CD14-positive monocyte (primary cell): ENCODE measurements at regions of chr1 and their contacts with region 1.

Region 1: DNA sequence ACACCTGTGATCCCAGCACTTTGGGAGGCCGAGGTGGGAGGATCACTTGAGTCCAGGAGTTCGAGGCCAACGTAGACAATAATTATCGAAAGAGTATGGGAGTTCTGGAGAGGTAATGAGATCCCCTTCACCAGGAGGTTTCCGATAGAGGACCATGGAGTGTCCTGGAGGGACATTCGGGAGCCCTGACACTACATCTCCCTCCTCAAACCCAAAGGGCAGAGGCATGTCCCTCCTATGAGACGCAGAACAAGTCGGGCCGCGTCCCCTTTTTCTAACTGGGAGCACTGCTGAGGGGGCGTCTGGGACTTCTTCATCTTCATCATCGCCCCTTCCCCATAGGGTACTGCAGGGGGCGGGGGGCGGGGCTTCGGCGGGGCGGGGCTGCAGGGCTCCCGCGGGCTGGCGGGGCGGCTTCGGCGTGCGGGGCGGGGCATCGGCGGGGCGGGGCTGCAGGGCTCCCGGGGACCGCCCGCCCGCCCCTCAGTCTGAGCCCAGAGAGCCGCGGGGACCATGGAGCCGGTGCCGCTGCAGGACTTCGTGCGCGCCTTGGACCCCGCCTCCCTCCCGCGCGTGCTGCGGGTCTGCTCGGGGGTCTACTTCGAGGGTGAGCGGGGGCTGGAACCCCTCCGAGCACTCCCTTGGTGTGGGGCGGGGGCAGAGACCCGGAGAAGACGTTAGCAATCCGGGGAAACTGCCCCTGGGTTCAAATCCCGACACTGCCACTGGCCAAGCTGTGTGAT is at the start of gene THEMIS2:
- DNase-seq: peak; percentile 65 to 67 (median 65)
- H3K4me3 ChIP-seq: peak within 1 kb of the TSS; percentile 86 to 100 (median 90)
- H3K4me3 Mint-ChIP-seq: peak within 1 kb of the TSS; percentile 99
- H3K27ac ChIP-seq: peak within 1 kb of the TSS; percentile 96 to 99
- H3K27ac Mint-ChIP-seq: peak within 1 kb of the TSS; percentile 99
- H3K4me1 ChIP-seq: peaks cover 73 to 87% of the 10 kb centered on the region in 2 donors
- H3K4me1 Mint-ChIP-seq: peaks cover 56% of the 10 kb centered on the region
- H3K27me3 ChIP-seq: no peaks in the 10 kb centered on the region
- H3K27me3 Mint-ChIP-seq: peaks cover 0 to 1% (median 0%) of the 10 kb centered on the region in 3 donors
- CTCF ChIP-seq: no peak
- polyA plus RNA-seq, gene THEMIS2: 306 to 618 (median 344) TPM

Region 2: DNA sequence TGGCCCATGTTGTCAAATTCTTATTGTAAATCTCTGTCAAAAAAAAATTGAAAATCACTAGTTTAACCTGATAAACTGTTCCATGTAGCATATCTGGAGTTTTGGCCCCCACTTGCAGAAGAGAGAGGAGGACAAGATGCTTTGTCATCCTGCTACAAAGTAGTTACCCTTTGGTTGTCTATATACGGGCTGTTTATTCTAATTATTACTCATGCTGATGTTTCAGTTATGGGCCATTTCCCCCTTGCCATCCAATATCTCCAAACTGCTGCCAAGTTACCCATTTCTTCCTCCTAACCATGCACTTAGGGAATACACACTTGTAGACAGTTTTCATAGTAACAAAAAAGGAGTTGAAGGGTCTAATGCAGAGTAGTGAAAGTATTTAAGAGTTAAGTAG is 76.6 kb before region 1 on chr1:
- intact Hi-C with region 1: no loop called
- DNase-seq: no peak
- H3K4me3 ChIP-seq: no peak overlapping the region
- H3K4me3 Mint-ChIP-seq: no peak overlapping the region
- H3K27ac ChIP-seq: no peak overlapping the region
- H3K27ac Mint-ChIP-seq: no peak overlapping the region
- H3K4me1 ChIP-seq: no peaks in the 10 kb centered on the region
- H3K4me1 Mint-ChIP-seq: no peaks in the 10 kb centered on the region
- H3K27me3 ChIP-seq: no peaks in the 10 kb centered on the region
- H3K27me3 Mint-ChIP-seq: no peaks in the 10 kb centered on the region
- CTCF ChIP-seq: no peak

Region 3: DNA sequence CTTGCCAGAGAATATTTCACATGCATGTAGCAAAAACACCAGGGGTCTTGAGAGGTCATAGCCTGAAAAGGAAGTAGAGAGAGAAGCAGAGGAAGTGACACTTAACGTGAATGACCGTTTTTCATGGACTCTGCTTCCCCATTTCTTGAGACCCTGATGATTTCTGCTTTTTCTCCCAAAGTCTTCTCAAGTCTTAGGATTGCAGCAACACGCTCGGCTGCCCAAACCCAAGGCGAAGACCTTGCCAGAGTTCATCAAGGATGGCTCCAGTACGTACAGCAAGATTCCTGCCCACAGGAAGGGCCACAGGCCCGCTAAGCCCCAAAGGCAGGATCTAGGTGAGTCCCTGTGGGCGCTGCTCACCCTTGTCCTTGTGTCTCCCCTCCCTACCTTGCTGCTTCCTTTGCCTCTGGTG is 12.9 kb after region 1 on chr1:
- intact Hi-C with region 1: loop called (anchors 1 to 2 kb)
- DNase-seq: peak; percentile 92 to 96 (median 96)
- H3K4me3 ChIP-seq: peak overlapping the region; percentile 7 to 63 (median 24)
- H3K4me3 Mint-ChIP-seq: peak overlapping the region; percentile 78 to 80
- H3K27ac ChIP-seq: peak overlapping the region; percentile 99 to 100
- H3K27ac Mint-ChIP-seq: peak overlapping the region; percentile 99 to 100 (median 99)
- H3K4me1 ChIP-seq: peaks cover 98 to 99% of the 10 kb centered on the region in 2 donors
- H3K4me1 Mint-ChIP-seq: peaks cover 87% of the 10 kb centered on the region
- H3K27me3 ChIP-seq: no peaks in the 10 kb centered on the region
- H3K27me3 Mint-ChIP-seq: peaks cover 0 to 3% (median 0%) of the 10 kb centered on the region in 3 donors
- CTCF ChIP-seq: no peak

Region 4: GRCh38 chr1:27891196-27891889 is 19.1 kb after region 1 on chr1:
- intact Hi-C with region 1: loop called in 1 of 2 experiments (anchors 2 kb)
- DNase-seq: peak; percentile 86 to 92 (median 91)
- H3K4me3 ChIP-seq: peak overlapping the region in 1 of 3 experiments; percentile 45
- H3K4me3 Mint-ChIP-seq: peak overlapping the region; percentile 47 to 63
- H3K27ac ChIP-seq: peak overlapping the region; percentile 91 to 99
- H3K27ac Mint-ChIP-seq: peak overlapping the region; percentile 96 to 99 (median 99)
- H3K4me1 ChIP-seq: peaks cover 69 to 72% of the 10 kb centered on the region in 2 donors
- H3K4me1 Mint-ChIP-seq: peaks cover 67% of the 10 kb centered on the region
- H3K27me3 ChIP-seq: no peaks in the 10 kb centered on the region
- H3K27me3 Mint-ChIP-seq: no peaks in the 10 kb centered on the region
- CTCF ChIP-seq: peak; percentile 63

Region 5: DNA sequence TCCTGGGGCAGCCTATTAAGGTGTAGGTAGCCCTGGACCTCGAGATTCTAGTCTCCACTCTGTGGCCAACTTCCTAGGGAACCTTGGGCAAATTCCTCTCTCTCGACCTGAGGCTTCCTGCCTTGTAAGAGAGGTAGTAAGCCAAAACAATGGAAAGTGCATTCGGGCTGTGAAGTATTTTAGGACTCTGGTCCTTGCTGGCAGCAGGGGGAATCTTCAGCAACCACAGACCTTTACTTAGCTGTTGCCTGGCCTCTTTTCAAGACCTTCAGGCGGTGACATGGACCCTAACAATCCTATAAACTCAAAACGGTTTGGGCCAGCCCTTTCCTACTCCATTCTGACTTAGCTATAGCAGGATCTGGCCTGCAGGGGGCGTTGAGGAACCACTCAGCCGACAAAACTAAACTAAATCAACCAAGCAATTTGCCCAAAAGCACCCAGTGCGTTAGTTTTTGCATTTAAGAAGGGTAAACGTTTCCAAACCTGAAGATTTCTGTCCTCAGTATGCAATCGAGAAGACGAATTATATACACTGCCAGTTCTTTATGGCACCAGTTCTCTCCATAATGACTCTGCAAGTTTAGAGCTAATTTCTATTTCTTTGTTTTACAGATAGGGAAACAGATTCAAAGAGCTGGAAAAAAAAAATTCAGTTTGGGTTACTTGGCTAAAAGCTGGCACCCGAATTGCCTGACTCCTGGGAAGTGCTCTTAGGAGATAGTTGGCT is 376.2 kb after region 1 on chr1:
- intact Hi-C with region 1: no loop called
- DNase-seq: peak; percentile 69 to 77 (median 76)
- H3K4me3 ChIP-seq: peak overlapping the region in 2 of 3 experiments; percentile 14 to 96
- H3K4me3 Mint-ChIP-seq: peak overlapping the region; percentile 61 to 82
- H3K27ac ChIP-seq: peak overlapping the region; percentile 75 to 89
- H3K27ac Mint-ChIP-seq: peak overlapping the region; percentile 94 to 99 (median 96)
- H3K4me1 ChIP-seq: peaks cover 66 to 69% of the 10 kb centered on the region in 2 donors
- H3K4me1 Mint-ChIP-seq: peaks cover 63% of the 10 kb centered on the region
- H3K27me3 ChIP-seq: no peaks in the 10 kb centered on the region
- H3K27me3 Mint-ChIP-seq: no peaks in the 10 kb centered on the region
- CTCF ChIP-seq: peak; percentile 97